ENCODE measurements at regions of chrX and their contacts with region 1.

Region 1: GRCh38 chrX:1537035-1537715 is at the start of gene P2RY8:
- DNase-seq: peak; percentile 66 to 89 (median 76)
- ATAC-seq: peak; percentile 77
- H3K4me3 ChIP-seq: peak within 1 kb of the TSS; percentile 97
- H3K4me3 Mint-ChIP-seq: peak within 1 kb of the TSS; percentile 98
- H3K27ac ChIP-seq: peak within 1 kb of the TSS; percentile 82 to 88
- H3K27ac Mint-ChIP-seq: peak within 1 kb of the TSS; percentile 98
- H3K4me1 ChIP-seq: peaks cover 32% of the 10 kb centered on the region
- H3K4me1 Mint-ChIP-seq: peaks cover 26% of the 10 kb centered on the region
- H3K27me3 ChIP-seq: no peaks in the 10 kb centered on the region
- H3K27me3 Mint-ChIP-seq: no peaks in the 10 kb centered on the region
- CTCF ChIP-seq: peak; percentile 19
- total RNA-seq, gene P2RY8: 139 TPM

Region 2: GRCh38 chrX:1462596-1463251 is 74.5 kb before region 1 on chrX:
- CTCF ChIA-PET with region 1: no interaction called
- POLR2A ChIA-PET with region 1: no interaction called
- intact Hi-C with region 1: loop called in 1 of 2 experiments (anchors 2 kb)
- DNase-seq: peak; percentile 50 to 95 (median 66)
- ATAC-seq: peak; percentile 79
- H3K4me3 ChIP-seq: no peak overlapping the region
- H3K4me3 Mint-ChIP-seq: peak overlapping the region; percentile 9
- H3K27ac ChIP-seq: peak overlapping the region; percentile 68 to 74
- H3K27ac Mint-ChIP-seq: peak overlapping the region; percentile 94
- H3K4me1 ChIP-seq: peaks cover 55% of the 10 kb centered on the region
- H3K4me1 Mint-ChIP-seq: peaks cover 49% of the 10 kb centered on the region
- H3K27me3 ChIP-seq: no peaks in the 10 kb centered on the region
- H3K27me3 Mint-ChIP-seq: no peaks in the 10 kb centered on the region
- CTCF ChIP-seq: no peak

Region 3: GRCh38 chrX:1491851-1492349 is 45.3 kb before region 1 on chrX:
- CTCF ChIA-PET with region 1: no interaction called
- POLR2A ChIA-PET with region 1: no interaction called
- intact Hi-C with region 1: loop called in 1 of 2 experiments (anchors 1 kb)
- DNase-seq: peak in 10 of 14 experiments; percentile 21 to 75 (median 42)
- ATAC-seq: peak; percentile 69
- H3K4me3 ChIP-seq: no peak overlapping the region
- H3K4me3 Mint-ChIP-seq: peak overlapping the region; percentile 30
- H3K27ac ChIP-seq: no peak overlapping the region
- H3K27ac Mint-ChIP-seq: peak overlapping the region; percentile 79
- H3K4me1 ChIP-seq: peaks cover 19% of the 10 kb centered on the region
- H3K4me1 Mint-ChIP-seq: peaks cover 37% of the 10 kb centered on the region
- H3K27me3 ChIP-seq: no peaks in the 10 kb centered on the region
- H3K27me3 Mint-ChIP-seq: no peaks in the 10 kb centered on the region
- CTCF ChIP-seq: no peak

Region 4: GRCh38 chrX:1554469-1555210 is 17.5 kb after region 1 on chrX:
- CTCF ChIA-PET with region 1: no interaction called
- POLR2A ChIA-PET with region 1: no interaction called
- intact Hi-C with region 1: loop called in 1 of 2 experiments (anchors 1 kb)
- DNase-seq: peak; percentile 52 to 93 (median 70)
- ATAC-seq: peak; percentile 97
- H3K4me3 ChIP-seq: peak overlapping the region; percentile 4
- H3K4me3 Mint-ChIP-seq: peak overlapping the region; percentile 78
- H3K27ac ChIP-seq: peak overlapping the region; percentile 55 to 77
- H3K27ac Mint-ChIP-seq: peak overlapping the region; percentile 98
- H3K4me1 ChIP-seq: peaks cover 76% of the 10 kb centered on the region
- H3K4me1 Mint-ChIP-seq: peaks cover 70% of the 10 kb centered on the region
- H3K27me3 ChIP-seq: no peaks in the 10 kb centered on the region
- H3K27me3 Mint-ChIP-seq: no peaks in the 10 kb centered on the region
- CTCF ChIP-seq: no peak

Region 5: GRCh38 chrX:1591102-1591900 is 54.1 kb after region 1 on chrX and contains the start of gene AKAP17A:
- CTCF ChIA-PET with region 1: no interaction called
- POLR2A ChIA-PET with region 1: no interaction called
- intact Hi-C with region 1: loop called in 1 of 2 experiments (anchors 2 kb)
- DNase-seq: peak; percentile 93 to 100 (median 98)
- ATAC-seq: peak; percentile 89
- H3K4me3 ChIP-seq: peak within 1 kb of the TSS; percentile 80
- H3K4me3 Mint-ChIP-seq: peak within 1 kb of the TSS; percentile 95
- H3K27ac ChIP-seq: peak within 1 kb of the TSS; percentile 53 to 55
- H3K27ac Mint-ChIP-seq: peak within 1 kb of the TSS; percentile 90
- H3K4me1 ChIP-seq: peaks cover 42% of the 10 kb centered on the region
- H3K4me1 Mint-ChIP-seq: peaks cover 43% of the 10 kb centered on the region
- H3K27me3 ChIP-seq: no peaks in the 10 kb centered on the region
- H3K27me3 Mint-ChIP-seq: no peaks in the 10 kb centered on the region
- CTCF ChIP-seq: no peak
- total RNA-seq, gene AKAP17A: 143 to 149 TPM